ENCODE measurements at regions of chr7 and their contacts with region 1.

Region 1: GRCh38 chr7:148962823-148963582 is 65.3 kb downstream of the PDIA4 start:
- DNase-seq: peak; percentile 32 to 76 (median 68)
- H3K4me3 ChIP-seq: peak overlapping the region; percentile 67
- H3K4me3 Mint-ChIP-seq: peak overlapping the region; percentile 85 to 96 (median 93)
- H3K27ac ChIP-seq: peak overlapping the region; percentile 52
- H3K27ac Mint-ChIP-seq: peak overlapping the region; percentile 82 to 93 (median 88)
- H3K4me1 ChIP-seq: peaks cover 11% of the 10 kb centered on the region
- H3K4me1 Mint-ChIP-seq: peaks cover 19 to 33% (median 30%) of the 10 kb centered on the region in 3 donors
- H3K27me3 ChIP-seq: no peaks in the 10 kb centered on the region
- H3K27me3 Mint-ChIP-seq: peaks cover 0 to 10% of the 10 kb centered on the region in 2 donors

Region 2: GRCh38 chr7:148503875-148504487 is 459.0 kb before region 1 on chr7:
- CTCF ChIA-PET with region 1: interaction called, 10 read pairs
- POLR2A ChIA-PET with region 1: interaction called, 3 read pairs
- DNase-seq: peak in 2 of 5 donors; percentile 29 to 39
- H3K4me3 ChIP-seq: no peak overlapping the region
- H3K4me3 Mint-ChIP-seq: no peak overlapping the region
- H3K27ac ChIP-seq: no peak overlapping the region
- H3K27ac Mint-ChIP-seq: no peak overlapping the region
- H3K4me1 ChIP-seq: no peaks in the 10 kb centered on the region
- H3K4me1 Mint-ChIP-seq: peaks cover 7 to 17% (median 16%) of the 10 kb centered on the region in 3 donors
- H3K27me3 ChIP-seq: peaks cover 4% of the 10 kb centered on the region
- H3K27me3 Mint-ChIP-seq: peaks cover 6 to 24% of the 10 kb centered on the region in 2 donors

Region 3: GRCh38 chr7:148575640-148576411 is 387.2 kb before region 1 on chr7:
- CTCF ChIA-PET with region 1: interaction called, 93 read pairs
- POLR2A ChIA-PET with region 1: no interaction called
- DNase-seq: peak; percentile 48 to 80 (median 55)
- H3K4me3 ChIP-seq: no peak overlapping the region
- H3K4me3 Mint-ChIP-seq: no peak overlapping the region
- H3K27ac ChIP-seq: no peak overlapping the region
- H3K27ac Mint-ChIP-seq: no peak overlapping the region
- H3K4me1 ChIP-seq: peaks cover 5% of the 10 kb centered on the region
- H3K4me1 Mint-ChIP-seq: peaks cover 0 to 3% (median 0%) of the 10 kb centered on the region in 3 donors
- H3K27me3 ChIP-seq: no peaks in the 10 kb centered on the region
- H3K27me3 Mint-ChIP-seq: peaks cover 0 to 4% of the 10 kb centered on the region in 2 donors

Region 4: DNA sequence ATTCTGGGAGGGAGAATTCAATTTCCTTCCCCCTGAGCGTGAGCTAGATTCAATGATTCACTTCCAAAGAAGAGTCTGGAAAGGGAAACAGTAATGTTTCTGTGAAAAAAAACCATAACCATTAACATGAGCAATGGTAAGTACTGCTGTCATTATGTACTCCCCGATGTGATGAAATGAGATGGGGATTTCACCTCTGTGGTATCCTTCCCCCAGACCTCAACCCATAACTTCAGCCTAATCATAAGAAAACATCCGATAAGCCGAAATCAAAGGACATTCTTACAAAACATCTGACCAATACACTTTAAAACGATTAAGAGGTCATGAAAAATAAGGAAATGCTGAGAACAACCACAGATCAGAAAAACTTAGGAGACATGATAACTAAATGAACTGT is 106.1 kb before region 1 on chr7:
- CTCF ChIA-PET with region 1: interaction called, 17 read pairs
- POLR2A ChIA-PET with region 1: interaction called, 6 read pairs
- DNase-seq: no peak
- H3K4me3 ChIP-seq: no peak overlapping the region
- H3K4me3 Mint-ChIP-seq: no peak overlapping the region
- H3K27ac ChIP-seq: no peak overlapping the region
- H3K27ac Mint-ChIP-seq: peak overlapping the region in 2 of 8 donors; percentile 7 to 35
- H3K4me1 ChIP-seq: no peaks in the 10 kb centered on the region
- H3K4me1 Mint-ChIP-seq: peaks cover 10 to 46% (median 27%) of the 10 kb centered on the region in 3 donors
- H3K27me3 ChIP-seq: no peaks in the 10 kb centered on the region
- H3K27me3 Mint-ChIP-seq: no peaks in the 10 kb centered on the region

Region 5: DNA sequence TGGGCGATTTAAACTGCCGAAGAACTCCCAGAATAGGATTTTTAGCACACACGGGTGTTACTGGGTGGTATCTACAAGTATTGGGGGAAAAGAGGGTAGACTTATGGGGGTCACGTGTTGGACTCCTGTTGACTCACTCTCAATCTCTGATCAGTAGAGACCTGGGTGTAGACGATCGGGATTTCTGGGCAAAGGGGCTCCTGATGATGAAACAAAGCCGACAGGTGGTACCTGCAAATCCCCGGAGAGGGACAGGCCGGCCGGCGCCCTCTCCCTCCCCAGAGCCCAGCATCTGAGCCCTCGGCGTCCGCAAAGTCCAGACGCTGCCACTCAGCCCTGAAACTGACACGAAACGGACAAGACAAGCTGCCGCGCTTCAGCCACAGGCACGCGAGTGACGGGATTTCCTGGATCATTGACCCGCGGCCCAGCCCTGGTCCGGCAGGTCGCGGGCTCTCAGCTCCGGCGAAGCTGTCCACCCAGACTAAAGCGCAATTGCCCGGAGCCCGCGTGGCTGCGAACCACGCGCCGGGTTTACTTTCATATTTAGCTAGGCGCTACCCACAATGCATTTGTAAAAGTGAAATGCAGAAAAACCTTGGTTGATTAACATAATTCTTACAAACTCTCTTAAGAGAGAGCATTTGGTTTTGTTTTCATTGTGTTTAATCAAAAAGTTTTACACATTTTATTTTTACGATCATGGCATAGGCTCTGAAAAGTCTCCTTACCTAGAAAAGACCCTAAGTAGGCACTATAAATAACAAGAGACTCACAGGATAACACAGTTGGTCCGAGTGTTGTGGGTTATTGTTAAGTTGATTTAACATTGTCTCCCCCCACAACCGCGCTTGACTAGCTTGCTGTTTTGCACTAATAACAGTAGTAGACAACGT is 22.1 kb before region 1 on chr7:
- CTCF ChIA-PET with region 1: interaction called, 12 read pairs
- POLR2A ChIA-PET with region 1: interaction called, 5 read pairs
- DNase-seq: peak; percentile 53 to 81 (median 76)
- H3K4me3 ChIP-seq: peak overlapping the region; percentile 87
- H3K4me3 Mint-ChIP-seq: peak overlapping the region; percentile 95 to 99 (median 97)
- H3K27ac ChIP-seq: peak overlapping the region; percentile 93
- H3K27ac Mint-ChIP-seq: peak overlapping the region; percentile 95 to 99 (median 97)
- H3K4me1 ChIP-seq: peaks cover 11% of the 10 kb centered on the region
- H3K4me1 Mint-ChIP-seq: peaks cover 16 to 22% (median 20%) of the 10 kb centered on the region in 3 donors
- H3K27me3 ChIP-seq: no peaks in the 10 kb centered on the region
- H3K27me3 Mint-ChIP-seq: no peaks in the 10 kb centered on the region

Region 6: GRCh38 chr7:148983187-148984146 is 20.5 kb after region 1 on chr7:
- CTCF ChIA-PET with region 1: interaction called, 13 read pairs
- POLR2A ChIA-PET with region 1: interaction called, 3 read pairs
- DNase-seq: peak; percentile 77 to 89 (median 83)
- H3K4me3 ChIP-seq: peak overlapping the region; percentile 62
- H3K4me3 Mint-ChIP-seq: peak overlapping the region; percentile 86 to 97 (median 94)
- H3K27ac ChIP-seq: peak overlapping the region; percentile 53
- H3K27ac Mint-ChIP-seq: peak overlapping the region; percentile 88 to 96 (median 96)
- H3K4me1 ChIP-seq: peaks cover 29% of the 10 kb centered on the region
- H3K4me1 Mint-ChIP-seq: peaks cover 56 to 76% (median 65%) of the 10 kb centered on the region in 3 donors
- H3K27me3 ChIP-seq: no peaks in the 10 kb centered on the region
- H3K27me3 Mint-ChIP-seq: peaks cover 0 to 7% of the 10 kb centered on the region in 2 donors

Region 7: DNA sequence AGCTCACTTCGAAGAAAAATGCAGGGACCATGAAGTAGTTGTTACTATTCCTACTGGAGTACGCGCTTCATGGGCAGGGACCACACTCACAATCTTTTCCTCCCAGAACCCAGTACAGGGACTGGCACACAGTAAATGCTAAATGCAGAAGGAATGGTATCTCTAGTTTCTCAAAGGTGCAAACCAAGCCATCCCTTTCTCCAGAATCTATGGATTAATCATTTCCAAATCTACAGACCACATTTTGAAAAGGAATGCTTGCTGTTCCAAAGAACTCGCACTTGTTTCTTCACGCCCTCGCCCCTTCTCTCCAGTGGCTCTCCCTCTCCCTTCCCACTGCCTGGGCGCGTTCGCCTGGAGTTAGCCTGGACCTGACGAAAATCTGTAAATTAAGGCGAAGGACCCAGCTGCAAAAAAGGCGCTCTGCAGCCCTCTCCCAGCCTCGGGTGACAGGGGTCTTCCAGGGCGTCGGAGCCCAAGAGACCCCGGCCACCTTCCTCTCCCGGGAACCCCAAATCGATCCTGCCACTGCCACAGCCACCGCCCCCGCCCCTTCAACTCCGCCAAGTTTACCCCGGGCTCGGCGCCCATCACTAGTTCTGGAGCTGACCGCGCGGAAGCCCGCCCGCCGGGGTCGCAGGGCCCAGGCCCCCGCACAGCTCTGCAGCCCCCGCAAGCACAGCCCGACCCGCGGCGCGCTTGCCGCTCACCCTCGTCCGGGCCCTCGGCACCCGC is 64.8 kb after region 1 on chr7:
- CTCF ChIA-PET with region 1: no interaction called
- POLR2A ChIA-PET with region 1: no interaction called
- DNase-seq: no peak
- H3K4me3 ChIP-seq: peak overlapping the region; percentile 70
- H3K4me3 Mint-ChIP-seq: peak overlapping the region; percentile 87 to 96 (median 92)
- H3K27ac ChIP-seq: peak overlapping the region; percentile 88
- H3K27ac Mint-ChIP-seq: peak overlapping the region; percentile 84 to 98 (median 95)
- H3K4me1 ChIP-seq: peaks cover 30% of the 10 kb centered on the region
- H3K4me1 Mint-ChIP-seq: peaks cover 46 to 57% (median 55%) of the 10 kb centered on the region in 3 donors
- H3K27me3 ChIP-seq: no peaks in the 10 kb centered on the region
- H3K27me3 Mint-ChIP-seq: peaks cover 0 to 1% of the 10 kb centered on the region in 2 donors